ENCODE measurements at regions of chr1 and their contacts with region 1.

Region 1: DNA sequence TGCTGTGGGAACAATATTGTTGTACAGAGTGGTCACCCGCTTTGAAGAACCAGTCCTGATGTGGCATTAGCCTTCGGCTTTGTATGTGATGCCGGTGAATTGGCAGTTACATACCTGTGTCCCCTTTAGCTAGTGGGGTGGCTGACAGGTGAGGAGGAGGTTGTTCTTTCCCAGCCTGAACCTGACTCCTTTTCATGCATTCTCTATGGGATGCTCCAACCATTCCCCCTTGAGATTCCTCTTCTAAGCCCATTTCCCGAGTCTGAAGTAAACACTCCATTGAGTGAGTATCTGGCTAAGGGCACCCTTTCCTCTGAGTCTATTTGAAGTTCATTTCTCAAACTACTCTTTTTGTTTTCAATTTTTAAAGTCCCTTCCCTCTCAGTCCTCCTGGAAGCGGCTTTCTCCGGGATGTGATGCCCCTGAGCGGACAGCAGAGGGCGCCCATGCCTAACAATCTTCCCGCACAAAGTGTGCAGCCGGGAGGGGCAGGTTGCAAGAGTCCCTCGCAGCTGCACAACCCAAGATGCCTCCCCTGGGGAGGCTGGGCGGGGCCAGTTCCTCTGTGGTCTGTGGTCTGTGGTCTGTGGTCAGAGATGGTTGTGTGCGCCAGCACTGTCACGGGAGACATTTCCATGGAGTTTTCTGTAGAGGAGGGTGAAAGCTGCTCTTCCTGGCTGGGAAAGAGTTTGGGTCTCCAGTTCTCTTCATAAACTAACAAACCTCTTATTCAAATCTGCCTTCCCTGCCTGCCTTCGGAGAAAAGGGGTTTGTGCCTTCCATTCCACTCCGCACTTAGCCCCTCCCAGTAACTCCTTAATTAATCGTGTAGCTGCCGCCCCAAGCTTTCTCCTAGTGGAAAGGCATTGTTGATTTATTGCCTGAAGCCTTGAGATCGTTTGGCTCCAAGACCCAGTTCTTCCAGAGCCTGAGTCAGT is 36.4 kb upstream of the LMX1A start:
- DNase-seq: peak; percentile 81 to 83
- ATAC-seq: peak; percentile 86 to 95 (median 93)
- H3K4me3 ChIP-seq: peak overlapping the region in 4 of 10 donors; percentile 16 to 32 (median 22)
- H3K27ac ChIP-seq: peak overlapping the region in 1 of 10 donors; percentile 26
- H3K4me1 ChIP-seq: peaks cover 0 to 23% (median 11%) of the 10 kb centered on the region in 9 donors
- H3K27me3 ChIP-seq: peaks cover 0 to 97% (median 0%) of the 10 kb centered on the region in 7 donors
- CTCF ChIP-seq: peak; percentile 86 to 98 (median 97)

Region 2: DNA sequence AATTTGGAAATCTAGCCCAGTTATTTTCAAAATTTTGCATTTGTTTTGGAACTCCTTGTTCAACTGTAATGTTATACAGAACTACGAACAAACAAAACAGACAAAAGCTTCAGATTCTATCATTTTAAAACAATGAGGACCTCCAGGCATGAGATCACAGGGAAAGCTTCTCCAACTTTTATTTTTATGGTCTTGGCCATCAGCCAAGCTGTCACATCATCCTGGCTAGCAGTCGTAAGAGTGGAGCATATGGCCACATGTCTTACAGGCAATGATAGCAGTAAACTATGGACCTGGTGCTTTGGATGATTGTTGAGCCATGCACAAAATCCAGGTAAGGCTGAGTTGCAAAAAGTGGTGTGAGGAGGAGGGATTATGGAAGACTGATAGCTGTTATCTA is 336.0 kb before region 1 on chr1:
- intact Hi-C with region 1: no loop called
- DNase-seq: no peak
- ATAC-seq: no peak
- H3K4me3 ChIP-seq: no peak overlapping the region
- H3K27ac ChIP-seq: no peak overlapping the region
- H3K4me1 ChIP-seq: peaks cover 0 to 4% (median 0%) of the 10 kb centered on the region in 9 donors
- H3K27me3 ChIP-seq: no peaks in the 10 kb centered on the region
- CTCF ChIP-seq: no peak

Region 3: GRCh38 chr1:165423136-165423535 is 30.2 kb after region 1 on chr1:
- intact Hi-C with region 1: no loop called
- DNase-seq: no peak
- ATAC-seq: peak in 1 of 8 donors; percentile 17
- H3K4me3 ChIP-seq: no peak overlapping the region
- H3K27ac ChIP-seq: no peak overlapping the region
- H3K4me1 ChIP-seq: peaks cover 9 to 64% (median 32%) of the 10 kb centered on the region in 9 donors
- H3K27me3 ChIP-seq: no peaks in the 10 kb centered on the region
- CTCF ChIP-seq: no peak

Region 4: DNA sequence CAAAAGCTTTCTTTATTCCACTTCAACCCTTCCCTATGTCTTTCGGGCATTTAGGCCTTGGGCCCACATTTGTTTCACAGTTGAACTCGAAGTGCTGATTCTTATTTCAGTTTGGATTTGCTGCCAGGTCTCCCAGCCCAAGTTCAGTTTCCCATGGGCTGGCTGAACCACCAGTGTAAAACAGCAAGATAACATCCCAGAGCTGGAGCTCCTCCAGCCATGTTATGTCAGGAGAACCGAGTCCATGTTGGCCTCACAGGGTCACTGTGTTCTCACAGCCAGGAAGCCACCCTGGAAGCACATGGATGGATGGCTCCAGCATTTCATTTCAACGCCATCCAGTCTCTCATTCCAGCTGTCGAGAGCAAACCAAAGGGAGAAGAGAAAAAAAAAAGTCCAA is 97.3 kb after region 1 on chr1:
- intact Hi-C with region 1: no loop called
- DNase-seq: peak; percentile 56 to 82
- ATAC-seq: peak; percentile 85 to 96 (median 91)
- H3K4me3 ChIP-seq: no peak overlapping the region
- H3K27ac ChIP-seq: peak overlapping the region in 6 of 10 donors; percentile 33 to 70 (median 40)
- H3K4me1 ChIP-seq: peaks cover 0 to 58% (median 19%) of the 10 kb centered on the region in 9 donors
- H3K27me3 ChIP-seq: peaks cover 0 to 5% (median 0%) of the 10 kb centered on the region in 7 donors
- CTCF ChIP-seq: no peak

Region 5: DNA sequence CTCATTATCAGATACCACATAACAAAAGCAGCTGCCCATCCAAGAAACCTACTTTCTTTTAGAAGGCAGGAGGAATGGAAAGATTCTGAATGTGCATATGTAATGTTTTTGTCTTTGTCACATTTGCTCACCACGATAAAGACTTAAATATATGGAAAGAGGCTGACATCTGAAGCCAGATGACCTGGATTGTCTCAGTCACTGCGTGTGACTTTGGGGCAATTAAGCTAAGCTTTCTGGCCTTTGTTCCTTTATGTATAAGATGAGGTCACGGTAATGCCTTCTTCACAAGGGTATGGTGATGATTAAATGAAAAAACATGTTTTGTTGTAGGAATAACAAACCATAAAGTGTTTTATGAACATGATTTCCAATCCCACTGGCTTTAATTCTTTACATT is 193.5 kb after region 1 on chr1:
- intact Hi-C with region 1: loop called in 2 of 10 experiments (anchors 5 kb)
- DNase-seq: no peak
- ATAC-seq: no peak
- H3K4me3 ChIP-seq: no peak overlapping the region
- H3K27ac ChIP-seq: no peak overlapping the region
- H3K4me1 ChIP-seq: no peaks in the 10 kb centered on the region
- H3K27me3 ChIP-seq: peaks cover 0 to 61% (median 0%) of the 10 kb centered on the region in 7 donors
- CTCF ChIP-seq: no peak

Measured in heart right ventricle (tissue), 16 donors.